Activated naive CD4-positive, alpha-beta T cell treated with anti-CD3 and anti-CD28 coated beads for 36 hours (primary cell): ENCODE measurements at regions of chr13 and their contacts with region 1.

Region 1: GRCh38 chr13:98576963-98577822 is at the start of gene STK24:
- DNase-seq: peak; percentile 46
- H3K4me3 Mint-ChIP-seq: peak within 1 kb of the TSS; percentile 84
- H3K27ac Mint-ChIP-seq: peak within 1 kb of the TSS; percentile 88
- H3K4me1 Mint-ChIP-seq: peaks cover 35% of the 10 kb centered on the region
- H3K27me3 Mint-ChIP-seq: no peaks in the 10 kb centered on the region
- total RNA-seq, gene STK24: 95.5 to 96.7 TPM

Region 2: DNA sequence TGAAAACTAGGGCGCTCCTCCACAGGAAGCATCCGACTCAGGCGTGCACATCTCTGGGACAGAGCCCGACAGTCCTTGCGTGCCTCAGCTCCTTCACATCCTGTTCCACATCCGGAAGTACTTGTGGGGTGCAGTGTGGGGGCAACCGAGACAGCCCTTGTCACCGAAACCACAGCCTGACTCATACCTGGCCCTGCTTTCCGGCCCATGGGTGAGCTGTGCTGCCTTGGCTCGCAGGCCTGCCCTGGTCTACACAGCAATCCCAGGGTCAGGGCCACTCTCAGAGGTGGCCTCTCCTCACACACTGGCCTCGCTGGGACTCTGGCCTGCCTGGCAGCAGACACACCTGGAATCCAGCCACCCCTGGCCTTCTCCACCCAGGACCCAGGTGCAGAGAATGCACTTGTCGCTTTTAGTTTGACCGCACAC is 100.6 kb before region 1 on chr13:
- CTCF ChIA-PET with region 1: interaction called, 3 read pairs
- intact Hi-C with region 1: loop called (anchors 1 kb)
- DNase-seq: peak; percentile 95
- H3K4me3 Mint-ChIP-seq: peak overlapping the region; percentile 71
- H3K27ac Mint-ChIP-seq: peak overlapping the region; percentile 92
- H3K4me1 Mint-ChIP-seq: peaks cover 64% of the 10 kb centered on the region
- H3K27me3 Mint-ChIP-seq: no peaks in the 10 kb centered on the region

Region 3: DNA sequence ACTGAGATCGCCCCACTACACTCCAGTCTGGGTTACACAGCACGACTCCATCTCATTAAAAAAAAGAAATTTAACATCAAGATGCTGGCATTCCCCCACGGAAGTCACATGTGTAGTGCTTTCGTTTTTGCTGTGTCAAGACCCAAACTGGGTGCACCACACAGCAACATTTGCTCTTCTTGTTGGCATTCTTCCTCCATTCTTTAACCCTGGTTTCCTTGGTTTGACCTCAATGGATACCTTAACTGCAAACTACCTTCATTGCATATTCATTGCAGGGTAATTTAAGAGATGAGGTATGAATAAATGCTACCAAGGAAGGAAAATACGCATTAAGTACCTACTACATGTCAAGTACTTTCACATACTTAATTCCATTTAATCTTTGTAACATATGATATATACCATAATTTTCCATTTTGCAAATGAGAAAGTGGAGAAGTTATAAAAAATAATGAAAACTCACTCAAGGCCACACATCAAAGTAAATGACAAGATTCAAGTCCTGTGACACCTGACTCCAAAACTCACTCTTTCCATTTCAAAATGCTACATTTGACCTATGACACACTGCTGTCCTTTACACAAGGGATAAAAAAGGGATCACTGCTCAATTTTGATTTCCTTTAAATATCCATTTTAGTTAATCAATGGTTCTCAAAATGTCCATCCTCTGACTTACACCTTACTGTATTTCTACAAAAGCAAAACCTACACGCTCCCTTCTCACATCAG is 59.5 kb before region 1 on chr13:
- CTCF ChIA-PET with region 1: no interaction called
- intact Hi-C with region 1: loop called (anchors 1 kb)
- DNase-seq: peak; percentile 75
- H3K4me3 Mint-ChIP-seq: no peak overlapping the region
- H3K27ac Mint-ChIP-seq: peak overlapping the region; percentile 81
- H3K4me1 Mint-ChIP-seq: peaks cover 97% of the 10 kb centered on the region
- H3K27me3 Mint-ChIP-seq: no peaks in the 10 kb centered on the region

Region 4: DNA sequence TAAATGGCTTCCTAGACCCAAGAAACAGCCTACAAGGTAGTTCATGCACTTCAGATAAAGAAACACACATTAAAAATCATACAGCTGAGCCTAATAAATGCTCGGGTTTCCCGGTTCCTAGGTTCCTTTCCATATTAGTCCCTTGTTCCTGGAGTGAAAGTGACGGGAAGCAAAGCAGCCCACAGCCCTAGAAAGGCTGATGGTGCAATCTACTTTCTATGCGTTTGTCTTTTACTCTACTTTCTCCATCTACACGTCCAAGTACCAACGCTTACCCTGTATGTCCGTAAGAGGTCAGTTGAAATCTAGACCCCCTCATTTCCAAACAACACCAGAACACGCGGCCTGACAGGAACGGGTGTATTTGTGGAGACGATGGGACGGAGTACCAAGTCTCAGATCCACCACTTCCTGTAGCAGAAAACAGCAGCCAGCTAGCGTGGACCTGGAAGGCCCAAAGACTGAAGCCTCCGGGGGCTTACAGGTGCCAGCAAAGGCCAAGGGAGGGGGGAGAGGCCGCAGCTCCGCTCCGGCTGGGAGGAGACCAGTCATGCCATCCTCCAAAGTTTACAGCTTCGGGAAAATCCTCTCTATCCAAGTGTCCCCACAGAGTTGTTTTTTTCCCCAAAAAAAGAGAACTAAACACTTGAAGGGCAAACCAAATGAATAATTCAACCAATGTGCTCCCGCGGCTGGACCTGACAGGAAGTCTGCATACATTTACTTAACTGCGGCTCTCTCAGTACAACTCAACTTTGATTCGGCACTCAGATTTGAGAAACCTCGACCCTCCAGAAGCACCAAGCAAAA is 34.4 kb before region 1 on chr13:
- CTCF ChIA-PET with region 1: no interaction called
- intact Hi-C with region 1: loop called (anchors 1 kb)
- DNase-seq: peak; percentile 63
- H3K4me3 Mint-ChIP-seq: peak overlapping the region; percentile 67
- H3K27ac Mint-ChIP-seq: peak overlapping the region; percentile 82
- H3K4me1 Mint-ChIP-seq: peaks cover 94% of the 10 kb centered on the region
- H3K27me3 Mint-ChIP-seq: no peaks in the 10 kb centered on the region

Region 5: DNA sequence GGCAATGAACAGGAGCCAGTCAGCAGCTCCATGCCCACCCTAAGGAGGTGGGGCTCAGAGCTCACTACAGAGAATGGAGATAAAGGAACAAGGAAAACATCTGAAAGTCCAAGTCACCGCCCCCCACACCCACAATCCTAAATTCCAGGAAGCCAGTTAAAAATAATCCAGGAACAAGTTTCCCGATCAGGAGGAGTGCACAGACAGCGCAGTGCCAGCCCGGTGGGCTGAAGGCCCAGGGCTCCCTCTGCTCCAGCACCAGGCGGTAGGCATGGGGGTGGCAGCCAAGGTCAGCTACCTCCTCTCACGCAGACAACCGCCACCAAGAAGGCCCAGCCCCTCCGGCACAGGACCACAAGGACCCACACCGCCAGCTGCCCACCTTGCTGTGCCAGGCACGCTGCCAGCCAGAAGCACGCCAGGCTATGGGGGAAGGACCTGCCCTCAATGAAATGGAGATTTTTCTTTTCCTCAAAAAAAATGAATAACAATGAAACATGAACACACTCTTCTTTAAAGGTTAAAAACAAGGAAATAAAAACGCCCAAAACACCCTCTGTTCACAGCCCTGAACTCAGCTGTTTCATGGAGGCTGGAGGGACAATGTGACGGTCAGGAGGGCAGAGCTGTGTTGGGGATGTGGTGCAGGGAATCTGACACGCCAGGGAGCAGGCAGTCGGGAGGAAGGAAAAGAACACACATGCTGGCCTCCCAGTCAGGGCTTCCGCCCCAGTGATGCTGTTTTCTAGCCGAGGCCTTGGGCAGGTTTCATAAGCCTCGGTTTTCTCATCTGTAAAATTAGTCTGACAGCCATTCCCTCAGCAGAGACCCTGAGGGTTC is 11.2 kb before region 1 on chr13:
- CTCF ChIA-PET with region 1: no interaction called
- intact Hi-C with region 1: loop called (anchors 1 kb)
- DNase-seq: peak; percentile 38
- H3K4me3 Mint-ChIP-seq: peak overlapping the region; percentile 53
- H3K27ac Mint-ChIP-seq: peak overlapping the region; percentile 88
- H3K4me1 Mint-ChIP-seq: peaks cover 92% of the 10 kb centered on the region
- H3K27me3 Mint-ChIP-seq: no peaks in the 10 kb centered on the region

Region 6: DNA sequence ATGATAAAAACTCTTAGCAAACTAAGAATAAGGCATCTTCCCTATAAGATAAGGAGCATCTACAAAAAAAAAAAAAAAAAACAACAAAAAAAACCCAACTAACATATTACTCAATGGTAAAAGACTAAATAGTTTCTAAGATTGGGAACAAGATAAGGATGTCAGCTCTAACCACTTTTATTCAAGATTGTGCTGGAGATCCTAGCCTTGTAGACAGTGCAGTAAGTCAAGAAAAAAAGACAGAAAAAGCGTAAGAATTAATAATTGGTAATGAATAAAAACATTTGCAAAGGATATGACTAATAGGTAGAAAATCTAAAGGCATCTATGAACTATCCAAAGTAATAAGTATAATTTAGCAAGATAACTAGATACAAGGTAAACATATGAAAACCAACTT is 1437.4 kb after region 1 on chr13:
- CTCF ChIA-PET with region 1: no interaction called
- intact Hi-C with region 1: no loop called
- DNase-seq: no peak
- H3K4me3 Mint-ChIP-seq: no peak overlapping the region
- H3K27ac Mint-ChIP-seq: no peak overlapping the region
- H3K4me1 Mint-ChIP-seq: no peaks in the 10 kb centered on the region
- H3K27me3 Mint-ChIP-seq: peaks cover 12% of the 10 kb centered on the region